Activated T-helper 2 cell treated with anti-CD3 and anti-CD28 coated beads, Interferon-gamma antibody, Interleukin-2, Interleukin-4, amounts not matched to agents 10 μg/mL and 5 μg/mL and 100 μg/mL, durations not matched to agents 14 hours and 24 hours and 36 hours (primary cell): ENCODE measurements at regions of chr1 and their contacts with region 1.

Region 1: GRCh38 chr1:25619101-25619890 is 2.7 kb downstream of the MAN1C1 start:
- DNase-seq: no peak
- H3K4me3 Mint-ChIP-seq: peak overlapping the region; percentile 85
- H3K27ac Mint-ChIP-seq: no peak overlapping the region
- H3K4me1 Mint-ChIP-seq: peaks cover 72% of the 10 kb centered on the region
- H3K27me3 Mint-ChIP-seq: peaks cover 75% of the 10 kb centered on the region

Region 2: GRCh38 chr1:25631750-25632485 is 12.6 kb after region 1 on chr1:
- intact Hi-C with region 1: loop called (anchors 1 kb)
- DNase-seq: no peak
- H3K4me3 Mint-ChIP-seq: peak overlapping the region; percentile 50
- H3K27ac Mint-ChIP-seq: peak overlapping the region; percentile 67
- H3K4me1 Mint-ChIP-seq: peaks cover 32% of the 10 kb centered on the region
- H3K27me3 Mint-ChIP-seq: peaks cover 54% of the 10 kb centered on the region

Region 3: DNA sequence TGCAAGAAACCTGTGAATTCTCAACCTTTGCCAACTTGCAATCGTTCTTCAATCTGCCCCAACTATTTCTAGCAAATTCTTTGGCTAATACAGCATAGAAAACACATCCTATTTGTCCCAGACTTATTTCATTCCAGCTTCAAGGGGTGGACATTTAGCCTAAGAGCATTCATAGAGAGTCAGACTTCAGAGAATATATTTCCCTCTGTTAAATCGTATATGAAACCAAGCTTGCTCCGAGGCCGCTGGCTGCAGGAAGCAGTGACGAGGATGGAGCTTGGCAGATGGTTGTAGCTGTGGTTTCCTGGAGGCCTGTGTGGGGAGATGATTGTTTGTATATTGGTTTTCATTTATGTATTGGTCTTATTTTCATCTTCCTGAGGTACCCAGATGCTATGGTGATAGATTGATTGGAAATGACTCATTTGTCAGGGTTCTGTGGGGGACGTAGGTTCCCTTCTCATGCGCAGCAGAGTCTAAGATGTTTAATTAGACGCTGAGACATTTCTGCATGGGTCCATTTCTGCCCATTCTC is 23.3 kb after region 1 on chr1:
- intact Hi-C with region 1: loop called (anchors 1 kb)
- DNase-seq: peak; percentile 75
- H3K4me3 Mint-ChIP-seq: peak overlapping the region; percentile 63
- H3K27ac Mint-ChIP-seq: peak overlapping the region; percentile 44
- H3K4me1 Mint-ChIP-seq: peaks cover 27% of the 10 kb centered on the region
- H3K27me3 Mint-ChIP-seq: peaks cover 78% of the 10 kb centered on the region

Region 4: GRCh38 chr1:25695090-25695770 is 75.9 kb after region 1 on chr1:
- intact Hi-C with region 1: loop called (anchors 5 kb)
- DNase-seq: no peak
- H3K4me3 Mint-ChIP-seq: no peak overlapping the region
- H3K27ac Mint-ChIP-seq: no peak overlapping the region
- H3K4me1 Mint-ChIP-seq: peaks cover 27% of the 10 kb centered on the region
- H3K27me3 Mint-ChIP-seq: peaks cover 64% of the 10 kb centered on the region